A673 (cell line): ENCODE measurements at regions of chr6 and their contacts with region 1.

Region 1: GRCh38 chr6:31493875-31494694 is 3.9 kb upstream of the MICB start:
- DNase-seq: peak; percentile 91
- H3K4me3 ChIP-seq: peak overlapping the region; percentile 78
- H3K27ac ChIP-seq: peak overlapping the region; percentile 64
- H3K4me1 ChIP-seq: peaks cover 7% of the 10 kb centered on the region
- H3K27me3 ChIP-seq: no peaks in the 10 kb centered on the region
- CTCF ChIP-seq: peak; percentile 98

Region 2: DNA sequence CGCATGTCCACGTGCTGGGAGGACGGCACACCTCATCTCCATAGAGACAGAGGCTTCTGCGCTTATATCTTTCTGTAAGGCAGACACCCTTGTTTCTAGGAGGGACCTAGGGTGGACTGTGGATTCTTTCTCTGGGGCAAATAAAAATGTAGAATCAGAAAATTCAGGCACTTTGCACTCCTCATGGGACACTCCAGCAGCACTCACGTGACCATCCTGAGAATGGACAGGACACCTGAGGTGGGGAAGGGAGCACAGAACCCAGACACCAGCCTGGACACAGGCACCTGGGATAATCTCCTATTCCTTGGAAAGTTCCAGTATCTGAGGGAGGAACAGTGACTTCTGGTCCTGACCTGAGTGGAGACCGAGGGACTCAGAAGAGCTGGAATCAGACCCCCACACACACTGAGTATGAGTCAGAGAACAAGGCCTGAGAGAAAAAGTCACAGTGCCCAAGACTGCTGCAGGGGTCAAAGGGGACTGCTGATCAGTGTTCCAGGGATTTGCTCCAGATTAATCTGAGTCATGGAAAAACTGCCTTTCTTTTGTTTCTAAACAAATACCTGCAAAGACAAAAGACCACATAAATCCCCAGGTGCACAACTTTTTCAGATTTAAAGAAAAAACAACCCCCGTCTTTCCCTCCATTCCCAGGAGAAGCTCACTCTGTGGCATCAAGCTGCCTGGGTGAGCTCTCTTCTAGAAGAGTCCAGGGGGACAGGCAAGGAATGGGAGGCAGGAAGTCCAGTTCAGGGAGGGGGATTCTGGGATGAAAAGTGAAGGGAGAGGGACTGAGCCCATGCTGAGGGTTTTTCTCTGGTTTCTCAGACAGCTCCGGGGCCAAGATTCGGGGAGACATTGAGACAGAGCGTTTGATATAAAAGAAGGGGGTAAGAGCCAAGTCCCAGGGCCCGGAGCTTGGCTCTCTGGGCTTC is 31.8 kb before region 1 on chr6:
- CTCF ChIA-PET with region 1: interaction called, 4 read pairs
- POLR2A ChIA-PET with region 1: interaction called, 12 read pairs
- intact Hi-C with region 1: no loop called
- DNase-seq: no peak
- H3K4me3 ChIP-seq: peak overlapping the region; percentile 29
- H3K27ac ChIP-seq: no peak overlapping the region
- H3K4me1 ChIP-seq: no peaks in the 10 kb centered on the region
- H3K27me3 ChIP-seq: peaks cover 6% of the 10 kb centered on the region
- CTCF ChIP-seq: no peak